ENCODE measurements at regions of chr5 and their contacts with region 1.

Region 1: DNA sequence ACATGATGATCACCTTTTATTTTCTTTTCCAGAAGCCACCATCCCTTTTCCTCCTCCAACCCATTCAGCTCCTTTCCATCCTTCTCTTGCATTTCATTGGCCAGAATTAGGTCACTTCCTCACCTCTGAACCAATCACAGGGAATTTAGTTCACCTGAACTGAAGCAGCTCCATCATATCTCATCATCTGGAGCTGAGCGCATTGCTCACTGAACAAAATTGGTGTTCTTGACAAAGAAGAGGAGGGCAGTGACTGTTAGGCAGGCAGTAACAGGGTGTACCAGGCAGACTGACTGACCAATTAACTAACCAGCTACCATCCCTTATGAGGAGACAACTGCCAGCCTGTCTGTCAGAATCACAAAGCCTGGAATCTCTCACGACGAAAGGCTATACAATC is 1.8 kb upstream of the ZNF354A start:
- DNase-seq: no peak
- H3K4me3 ChIP-seq: no peak overlapping the region
- H3K27ac ChIP-seq: no peak overlapping the region
- H3K4me1 ChIP-seq: peaks cover 0 to 13% (median 12%) of the 10 kb centered on the region in 4 donors
- H3K27me3 ChIP-seq: no peaks in the 10 kb centered on the region
- CTCF ChIP-seq: no peak
- EP300 ChIP-seq: no peak
- POLR2A ChIP-seq: no peak

Region 2: GRCh38 chr5:178626484-178627258 is 105.6 kb before region 1 on chr5 and contains the start of gene CLK4:
- intact Hi-C with region 1: loop called (anchors 5 kb)
- DNase-seq: peak; percentile 98
- H3K4me3 ChIP-seq: peak within 1 kb of the TSS; percentile 80 to 96 (median 91)
- H3K27ac ChIP-seq: peak within 1 kb of the TSS; percentile 94 to 98 (median 96)
- H3K4me1 ChIP-seq: peaks cover 28 to 41% (median 40%) of the 10 kb centered on the region in 4 donors
- H3K27me3 ChIP-seq: no peaks in the 10 kb centered on the region
- CTCF ChIP-seq: no peak
- EP300 ChIP-seq: no peak
- POLR2A ChIP-seq: peak; percentile 8
- total RNA-seq, gene CLK4: 16.7 to 24.9 (median 18.9) TPM

Region 3: DNA sequence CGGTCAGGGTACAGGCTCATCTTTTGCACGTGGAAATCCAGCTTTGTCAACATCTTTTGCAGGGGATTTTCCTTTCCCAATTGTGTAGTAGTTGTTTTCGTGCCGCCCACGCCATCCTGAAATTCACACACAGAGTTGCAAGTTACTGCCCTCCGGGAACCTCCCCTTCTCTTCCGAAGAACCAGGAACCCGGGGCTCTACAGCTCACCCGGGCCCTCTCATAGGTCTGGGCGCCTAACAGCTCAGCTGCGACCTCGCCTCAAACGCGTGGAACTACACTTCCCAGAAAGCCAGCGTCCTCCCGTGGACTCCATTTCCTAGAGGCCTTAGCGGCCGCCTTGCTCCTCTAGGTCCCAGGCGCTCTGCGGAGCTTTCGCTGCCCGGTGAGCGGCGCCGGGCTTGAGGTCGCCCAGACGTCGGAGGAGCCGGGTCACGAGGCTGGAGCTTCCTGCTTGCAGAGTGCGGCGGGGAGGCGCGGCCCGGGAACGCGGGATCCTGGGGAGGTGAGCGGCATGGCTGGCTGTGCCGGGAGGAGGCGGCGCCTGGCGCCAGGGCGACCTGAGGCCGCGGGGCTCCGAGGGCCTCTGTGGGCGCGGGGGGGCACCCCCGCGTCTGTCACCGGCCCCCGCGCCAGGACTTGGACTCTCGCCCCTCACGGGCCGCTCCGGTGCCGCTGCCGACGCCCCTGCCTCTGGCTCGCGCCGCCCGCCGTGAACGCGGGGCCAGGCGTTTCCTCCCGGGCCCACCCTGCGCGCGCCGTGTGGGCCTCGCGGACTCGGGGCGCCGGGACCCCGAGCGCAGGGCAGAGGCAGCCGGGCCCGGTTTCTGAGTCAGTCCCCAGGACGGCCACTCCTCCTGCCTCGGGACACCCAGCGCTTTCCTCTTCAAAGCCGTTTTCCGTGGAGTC is 127.6 kb after region 1 on chr5 and contains the start of gene ZNF354B:
- intact Hi-C with region 1: loop called (anchors 2 kb)
- DNase-seq: peak; percentile 95
- H3K4me3 ChIP-seq: peak within 1 kb of the TSS; percentile 69 to 96 (median 93)
- H3K27ac ChIP-seq: peak within 1 kb of the TSS; percentile 85 to 92 (median 88)
- H3K4me1 ChIP-seq: peaks cover 7 to 31% (median 24%) of the 10 kb centered on the region in 4 donors
- H3K27me3 ChIP-seq: no peaks in the 10 kb centered on the region
- CTCF ChIP-seq: peak; percentile 14 to 26 (median 16)
- EP300 ChIP-seq: no peak
- POLR2A ChIP-seq: peak; percentile 27
- total RNA-seq, gene ZNF354B: 9.8 to 18.8 (median 15.4) TPM

Region 4: DNA sequence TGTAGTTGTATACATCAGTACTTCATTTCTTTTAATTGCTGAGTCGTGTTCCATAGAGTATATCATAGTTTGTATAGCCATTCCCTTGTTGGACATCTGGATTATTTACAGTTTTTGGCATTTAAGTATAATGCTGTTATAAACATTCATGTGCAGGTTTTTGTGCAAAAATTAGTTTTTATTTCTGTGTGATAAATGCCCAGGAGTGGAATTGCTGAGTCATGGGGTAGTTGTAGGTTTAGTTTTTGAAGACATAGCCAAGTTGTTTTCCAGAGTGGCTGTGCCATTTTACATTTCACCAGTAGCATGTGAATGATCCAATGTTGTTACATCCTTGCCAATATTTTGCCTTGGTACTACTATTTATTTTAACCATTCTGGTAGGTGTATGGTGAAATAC is 140.0 kb after region 1 on chr5:
- intact Hi-C with region 1: no loop called
- DNase-seq: no peak
- H3K4me3 ChIP-seq: no peak overlapping the region
- H3K27ac ChIP-seq: no peak overlapping the region
- H3K4me1 ChIP-seq: no peaks in the 10 kb centered on the region
- H3K27me3 ChIP-seq: no peaks in the 10 kb centered on the region
- CTCF ChIP-seq: no peak
- EP300 ChIP-seq: no peak
- POLR2A ChIP-seq: no peak

Region 5: GRCh38 chr5:178940569-178941360 is 208.5 kb after region 1 on chr5 and contains the start of gene ZNF454:
- intact Hi-C with region 1: loop called (anchors 10 kb)
- DNase-seq: peak; percentile 96
- H3K4me3 ChIP-seq: peak within 1 kb of the TSS; percentile 66 to 83 (median 76)
- H3K27ac ChIP-seq: peak within 1 kb of the TSS; percentile 77 to 88 (median 86)
- H3K4me1 ChIP-seq: peaks cover 9 to 24% (median 11%) of the 10 kb centered on the region in 4 donors
- H3K27me3 ChIP-seq: no peaks in the 10 kb centered on the region
- CTCF ChIP-seq: peak in 1 of 3 experiments; percentile 19
- EP300 ChIP-seq: no peak
- POLR2A ChIP-seq: no peak
- total RNA-seq, gene ZNF454: 2.3 to 4.8 (median 4.2) TPM

Region 6: DNA sequence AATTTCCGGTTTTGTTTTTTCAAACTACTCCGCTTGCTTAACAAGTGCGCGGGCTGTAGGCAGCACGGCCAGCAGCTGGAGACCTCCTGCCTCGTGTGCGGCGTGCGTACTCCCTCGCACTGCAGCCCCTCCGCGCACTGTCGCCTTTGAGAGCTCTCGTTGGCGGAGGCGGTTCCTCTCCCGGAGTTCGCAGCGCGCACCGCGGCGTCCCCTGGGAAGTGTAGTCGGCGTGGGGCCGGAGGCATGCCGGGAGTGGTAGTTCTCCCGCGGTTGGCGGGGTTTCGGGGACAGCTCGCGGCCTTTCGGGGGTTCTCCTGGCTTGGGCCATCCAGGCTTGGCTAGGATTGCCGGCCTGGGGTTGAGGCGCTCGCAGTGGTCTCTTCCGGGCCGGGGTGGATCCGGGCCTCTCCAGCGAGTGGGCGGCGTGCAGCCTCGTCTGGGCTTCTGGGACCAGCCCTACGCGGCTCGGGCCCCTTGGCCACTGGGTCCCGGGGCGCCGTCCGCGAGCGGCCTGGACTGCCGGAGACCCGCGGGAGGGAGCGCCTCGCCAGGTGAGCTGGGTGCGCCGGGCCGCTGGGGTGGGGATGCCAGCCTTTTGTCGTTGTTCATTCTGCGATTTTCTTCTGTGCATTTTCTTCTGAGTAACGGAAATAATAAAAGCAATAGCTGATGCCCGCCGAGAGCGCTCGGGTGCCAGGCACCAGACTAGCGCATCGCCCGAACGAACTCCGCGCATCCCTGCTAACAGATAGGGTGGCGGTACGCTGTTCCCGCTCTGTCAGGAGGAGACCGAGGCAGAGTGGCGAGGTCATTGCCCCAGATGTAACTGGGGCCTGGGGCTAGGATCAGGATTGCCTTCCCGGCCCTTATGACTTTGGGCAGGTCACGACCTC is 328.1 kb after region 1 on chr5 and contains the start of gene ZNF354C:
- intact Hi-C with region 1: loop called (anchors 2 kb)
- DNase-seq: peak; percentile 97
- H3K4me3 ChIP-seq: peak within 1 kb of the TSS; percentile 71 to 80 (median 76)
- H3K27ac ChIP-seq: peak within 1 kb of the TSS; percentile 75 to 85 (median 80)
- H3K4me1 ChIP-seq: peaks cover 4 to 16% (median 13%) of the 10 kb centered on the region in 4 donors
- H3K27me3 ChIP-seq: no peaks in the 10 kb centered on the region
- CTCF ChIP-seq: peak in 1 of 3 experiments; percentile 8
- EP300 ChIP-seq: no peak
- POLR2A ChIP-seq: no peak
- total RNA-seq, gene ZNF354C: 5.0 to 7.9 (median 6.3) TPM

Measured in esophagus muscularis mucosa (tissue), 4 donors.